ENCODE measurements at regions of chrX and their contacts with region 1.

Region 1: DNA sequence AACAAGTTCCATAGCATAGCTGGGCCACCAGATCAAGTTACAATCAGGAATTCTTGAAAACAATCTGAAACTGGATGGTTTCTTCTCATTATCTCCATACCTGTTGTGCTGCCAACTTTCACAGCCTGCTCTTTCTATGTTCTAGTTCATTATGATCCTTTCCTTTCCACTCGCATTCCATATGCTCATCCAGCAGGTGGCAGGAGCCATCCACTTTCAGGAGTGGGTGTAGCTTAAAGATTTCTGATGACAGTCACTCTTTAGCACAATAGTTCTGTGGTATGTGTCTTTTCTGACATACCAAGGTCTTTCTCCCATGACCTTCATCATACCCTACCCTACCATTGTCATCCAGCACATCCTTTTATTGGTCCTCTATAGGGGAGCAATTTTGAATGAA is 46.4 kb downstream of the PAGE2 start:
- DNase-seq: peak; percentile 9 to 51 (median 27)
- ATAC-seq: peak in 3 of 4 donors; percentile 59 to 65 (median 60)
- H3K4me3 ChIP-seq: no peak overlapping the region
- H3K27ac ChIP-seq: no peak overlapping the region
- H3K4me1 ChIP-seq: no peaks in the 10 kb centered on the region
- H3K27me3 ChIP-seq: peaks cover 0 to 10% (median 0%) of the 10 kb centered on the region in 9 donors
- CTCF ChIP-seq: peak; percentile 36 to 64 (median 54)
- POLR2A ChIP-seq: no peak

Region 2: DNA sequence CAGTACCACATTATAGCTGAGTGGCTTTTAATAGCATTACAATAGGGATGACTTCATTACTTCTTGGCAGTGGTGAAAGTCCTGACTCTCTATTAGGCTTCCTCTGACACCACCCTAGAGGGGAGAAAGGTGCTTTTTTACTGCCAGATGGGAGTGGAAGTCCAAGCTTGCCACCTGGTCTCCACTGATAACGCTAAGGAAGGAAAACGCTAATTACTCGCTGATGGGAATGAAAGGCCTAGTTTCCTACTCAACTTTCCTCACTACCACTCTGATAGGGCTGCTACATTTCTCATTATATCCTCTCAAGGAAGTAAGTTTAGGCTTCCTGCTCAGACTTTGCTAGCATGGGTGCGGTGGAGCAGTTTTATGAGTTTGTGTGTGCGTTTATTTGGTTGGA is 191.8 kb after region 1 on chrX:
- intact Hi-C with region 1: loop called in 3 of 10 experiments (anchors 10 kb)
- DNase-seq: peak in 3 of 5 donors; percentile 18 to 26 (median 23)
- ATAC-seq: peak; percentile 71 to 97 (median 83)
- H3K4me3 ChIP-seq: no peak overlapping the region
- H3K27ac ChIP-seq: peak overlapping the region in 10 of 12 donors; percentile 11 to 85 (median 70)
- H3K4me1 ChIP-seq: peaks cover 0 to 6% (median 0%) of the 10 kb centered on the region in 12 donors
- H3K27me3 ChIP-seq: peaks cover 0 to 11% (median 0%) of the 10 kb centered on the region in 9 donors
- CTCF ChIP-seq: no peak
- POLR2A ChIP-seq: no peak

Region 3: DNA sequence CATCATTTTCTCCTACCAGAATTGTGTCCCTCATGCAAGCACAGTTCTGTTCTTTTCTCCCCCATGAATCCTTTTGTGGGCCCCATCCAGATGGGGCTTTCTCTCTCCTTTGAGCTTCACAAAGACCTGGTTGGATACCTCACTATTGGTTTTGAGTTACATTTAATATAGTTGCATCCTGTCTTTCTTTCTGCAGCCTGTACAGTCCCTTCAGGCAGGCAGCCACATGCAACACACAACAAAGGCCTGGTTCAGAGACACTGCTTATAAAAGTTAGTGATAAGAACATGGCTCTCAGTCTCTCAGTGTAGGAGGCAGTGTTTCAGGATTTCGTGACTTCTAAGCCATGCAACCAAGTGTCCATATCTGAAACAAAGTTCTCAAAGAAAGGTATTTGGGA is 200.1 kb after region 1 on chrX:
- intact Hi-C with region 1: loop called in 5 of 10 experiments (anchors 10 kb)
- DNase-seq: no peak
- ATAC-seq: no peak
- H3K4me3 ChIP-seq: no peak overlapping the region
- H3K27ac ChIP-seq: no peak overlapping the region
- H3K4me1 ChIP-seq: no peaks in the 10 kb centered on the region
- H3K27me3 ChIP-seq: peaks cover 0 to 6% (median 0%) of the 10 kb centered on the region in 9 donors
- CTCF ChIP-seq: no peak
- POLR2A ChIP-seq: no peak

Region 4: DNA sequence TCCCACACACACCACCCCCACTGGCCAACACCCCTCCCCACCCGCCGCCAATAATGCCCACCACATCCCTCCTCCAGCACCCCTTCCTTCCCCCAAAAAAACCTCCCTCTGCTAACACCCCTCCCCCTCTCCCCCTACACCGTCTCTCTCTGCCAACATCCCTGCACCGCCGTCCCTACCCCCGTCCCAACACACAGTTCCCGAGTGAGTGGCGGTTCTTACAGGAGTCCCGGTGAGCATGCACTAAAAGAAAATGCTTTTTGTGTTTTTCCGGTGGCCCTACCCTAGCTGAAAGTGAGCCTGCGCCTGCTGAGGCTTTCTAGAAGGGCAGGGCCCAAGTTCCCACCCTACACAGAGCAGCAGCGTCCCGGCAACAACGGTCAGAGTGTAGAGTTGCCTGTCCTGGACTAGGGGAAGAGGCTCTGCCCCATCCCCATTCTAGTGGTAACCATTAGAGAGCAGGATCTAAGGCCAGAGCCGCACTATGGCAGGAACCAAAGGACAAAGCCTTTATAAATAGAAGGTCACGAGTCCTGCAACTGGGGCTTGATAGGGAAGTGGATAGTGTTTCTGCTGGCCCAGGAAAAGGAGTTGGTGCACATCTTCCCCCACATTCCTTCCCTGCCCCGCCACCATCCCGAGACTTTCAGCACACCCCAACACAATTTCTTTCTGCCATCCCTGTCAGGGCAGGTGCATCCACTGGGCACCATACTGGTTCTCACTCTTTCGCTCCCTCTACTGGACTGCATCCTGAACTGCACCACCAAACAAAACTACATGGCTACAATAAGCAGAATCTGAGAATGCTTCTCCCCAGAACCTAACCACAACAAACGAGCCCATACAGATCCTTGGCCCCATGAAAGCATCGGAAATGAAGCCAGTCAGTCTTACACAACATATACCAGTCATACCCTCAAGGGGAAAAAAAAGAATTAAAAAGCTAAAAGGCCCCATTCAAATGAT is 207.6 kb after region 1 on chrX:
- intact Hi-C with region 1: loop called in 6 of 10 experiments (anchors 2 to 10 kb)
- DNase-seq: peak in 2 of 5 donors; percentile 17 to 27
- ATAC-seq: peak in 3 of 4 donors; percentile 55 to 64 (median 58)
- H3K4me3 ChIP-seq: peak overlapping the region in 1 of 12 donors; percentile 9
- H3K27ac ChIP-seq: peak overlapping the region in 9 of 12 donors; percentile 2 to 61 (median 45)
- H3K4me1 ChIP-seq: no peaks in the 10 kb centered on the region
- H3K27me3 ChIP-seq: peaks cover 0 to 14% (median 0%) of the 10 kb centered on the region in 9 donors
- CTCF ChIP-seq: peak; percentile 35 to 60 (median 47)
- POLR2A ChIP-seq: no peak

Region 5: DNA sequence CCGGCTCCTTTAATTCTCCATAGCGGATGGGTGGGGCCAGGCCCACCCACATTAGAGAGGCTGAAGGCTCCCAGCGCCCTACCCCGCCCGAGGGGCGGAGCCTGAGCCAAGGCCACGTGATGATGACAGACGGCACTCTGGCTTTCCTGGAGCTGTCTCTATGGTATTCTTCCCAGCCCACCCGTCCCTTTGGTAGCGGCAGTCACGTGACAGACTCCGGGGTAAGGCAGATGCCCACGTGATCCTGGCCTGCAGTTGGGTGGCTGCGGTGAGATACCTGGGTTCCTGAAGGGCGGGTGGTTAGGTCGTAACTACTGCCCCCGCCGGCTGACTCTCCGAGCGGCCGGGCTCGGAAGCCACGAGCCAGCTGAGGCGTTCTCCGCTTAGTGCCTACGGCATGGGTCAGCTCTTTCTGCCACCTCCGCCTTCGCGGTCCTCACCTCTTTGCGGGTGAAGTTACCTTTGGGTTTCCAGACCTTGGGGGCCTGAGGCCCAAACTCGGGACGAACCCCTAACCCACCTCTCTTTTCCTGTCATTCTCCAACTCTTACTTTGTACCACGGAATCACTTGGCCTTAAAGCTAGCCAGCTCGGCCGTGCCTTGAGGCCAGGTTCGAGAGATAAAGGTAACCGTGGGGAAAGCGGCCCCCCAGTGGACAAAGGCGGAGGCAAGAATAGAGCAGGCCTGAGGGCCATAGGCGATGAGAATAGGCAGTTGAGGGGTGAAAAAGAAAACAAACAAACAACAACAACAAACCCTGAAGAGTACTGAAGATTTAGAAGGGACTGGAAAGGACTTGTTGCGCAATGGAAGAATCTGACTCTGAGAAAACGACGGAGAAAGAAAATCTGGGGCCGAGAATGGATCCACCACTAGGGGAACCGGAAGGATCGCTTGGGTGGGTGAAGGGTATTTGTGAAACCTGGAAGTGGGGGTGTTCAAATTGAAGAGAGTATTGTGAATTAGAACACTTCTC is 582.6 kb after region 1 on chrX and contains the start of gene RRAGB:
- intact Hi-C with region 1: loop called in 2 of 10 experiments (anchors 10 kb)
- DNase-seq: peak; percentile 93 to 96 (median 94)
- ATAC-seq: peak; percentile 100
- H3K4me3 ChIP-seq: peak within 1 kb of the TSS; percentile 51 to 99 (median 70)
- H3K27ac ChIP-seq: peak within 1 kb of the TSS; percentile 62 to 89 (median 86)
- H3K4me1 ChIP-seq: peaks cover 0 to 21% (median 2%) of the 10 kb centered on the region in 12 donors
- H3K27me3 ChIP-seq: no peaks in the 10 kb centered on the region
- CTCF ChIP-seq: peak in 11 of 12 donors; percentile 23 to 58 (median 45)
- POLR2A ChIP-seq: no peak
- total RNA-seq, gene RRAGB: 8.1 to 16.1 (median 11.5) TPM

Region 6: DNA sequence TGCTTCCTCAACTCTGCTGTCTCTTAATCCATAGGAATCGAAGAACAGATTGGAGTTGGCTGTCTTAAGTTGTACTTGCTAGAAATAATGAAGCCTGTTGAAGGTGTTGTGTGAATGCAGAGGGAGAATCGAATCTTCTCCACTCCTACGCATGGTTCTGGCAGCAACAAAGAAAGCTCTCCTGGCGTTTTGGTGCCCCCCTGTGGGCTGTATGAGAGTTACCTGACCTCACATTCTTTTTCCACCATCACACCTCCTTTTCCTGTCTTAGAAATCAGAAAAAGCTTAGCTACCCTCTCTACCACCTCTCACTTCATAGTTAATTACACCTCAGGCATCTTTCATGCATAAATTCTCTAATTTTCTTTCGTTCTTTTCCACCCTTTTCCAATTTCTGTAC is 1113.3 kb after region 1 on chrX:
- intact Hi-C with region 1: loop called in 3 of 10 experiments (anchors 5 to 10 kb)
- DNase-seq: peak in 4 of 5 donors; percentile 25 to 43 (median 32)
- ATAC-seq: peak in 2 of 4 donors; percentile 56 to 63
- H3K4me3 ChIP-seq: no peak overlapping the region
- H3K27ac ChIP-seq: no peak overlapping the region
- H3K4me1 ChIP-seq: no peaks in the 10 kb centered on the region
- H3K27me3 ChIP-seq: no peaks in the 10 kb centered on the region
- CTCF ChIP-seq: peak; percentile 50 to 73 (median 59)
- POLR2A ChIP-seq: no peak